GM10248 (cell line): ENCODE measurements at regions of chr6 and their contacts with region 1.

Region 1: DNA sequence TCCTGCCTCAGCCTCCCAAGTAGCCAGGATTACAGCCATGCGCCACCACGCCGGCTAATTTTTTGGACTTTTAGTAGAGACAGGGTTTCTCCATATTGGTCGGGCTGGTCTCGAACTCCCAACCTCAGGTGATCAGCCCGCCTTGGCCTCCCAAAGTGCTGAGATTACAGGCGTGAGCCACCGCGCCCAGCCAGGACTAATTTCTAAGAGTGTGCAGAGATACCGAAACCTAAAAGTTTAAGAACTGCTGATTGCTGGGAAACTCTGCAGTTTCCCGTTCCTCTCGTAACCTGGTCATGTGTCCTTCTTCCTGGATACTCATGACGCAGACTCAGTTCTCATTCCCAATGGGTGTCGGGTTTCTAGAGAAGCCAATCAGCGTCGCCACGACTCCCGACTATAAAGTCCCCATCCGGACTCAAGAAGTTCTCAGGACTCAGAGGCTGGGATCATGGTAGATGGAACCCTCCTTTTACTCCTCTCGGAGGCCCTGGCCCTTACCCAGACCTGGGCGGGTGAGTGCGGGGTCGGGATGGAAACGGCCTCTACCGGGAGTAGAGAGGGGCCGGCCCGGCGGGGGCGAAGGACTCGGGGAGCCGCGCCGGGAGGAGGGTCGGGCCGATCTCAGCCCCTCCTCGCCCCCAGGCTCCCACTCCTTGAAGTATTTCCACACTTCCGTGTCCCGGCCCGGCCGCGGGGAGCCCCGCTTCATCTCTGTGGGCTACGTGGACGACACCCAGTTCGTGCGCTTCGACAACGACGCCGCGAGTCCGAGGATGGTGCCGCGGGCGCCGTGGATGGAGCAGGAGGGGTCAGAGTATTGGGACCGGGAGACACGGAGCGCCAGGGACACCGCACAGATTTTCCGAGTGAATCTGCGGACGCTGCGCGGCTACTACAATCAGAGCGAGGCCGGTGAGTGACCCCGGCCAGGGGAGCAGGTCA is at the start of gene HLA-E:
- DNase-seq: peak; percentile 93
- CTCF ChIP-seq: no peak

Region 2: DNA sequence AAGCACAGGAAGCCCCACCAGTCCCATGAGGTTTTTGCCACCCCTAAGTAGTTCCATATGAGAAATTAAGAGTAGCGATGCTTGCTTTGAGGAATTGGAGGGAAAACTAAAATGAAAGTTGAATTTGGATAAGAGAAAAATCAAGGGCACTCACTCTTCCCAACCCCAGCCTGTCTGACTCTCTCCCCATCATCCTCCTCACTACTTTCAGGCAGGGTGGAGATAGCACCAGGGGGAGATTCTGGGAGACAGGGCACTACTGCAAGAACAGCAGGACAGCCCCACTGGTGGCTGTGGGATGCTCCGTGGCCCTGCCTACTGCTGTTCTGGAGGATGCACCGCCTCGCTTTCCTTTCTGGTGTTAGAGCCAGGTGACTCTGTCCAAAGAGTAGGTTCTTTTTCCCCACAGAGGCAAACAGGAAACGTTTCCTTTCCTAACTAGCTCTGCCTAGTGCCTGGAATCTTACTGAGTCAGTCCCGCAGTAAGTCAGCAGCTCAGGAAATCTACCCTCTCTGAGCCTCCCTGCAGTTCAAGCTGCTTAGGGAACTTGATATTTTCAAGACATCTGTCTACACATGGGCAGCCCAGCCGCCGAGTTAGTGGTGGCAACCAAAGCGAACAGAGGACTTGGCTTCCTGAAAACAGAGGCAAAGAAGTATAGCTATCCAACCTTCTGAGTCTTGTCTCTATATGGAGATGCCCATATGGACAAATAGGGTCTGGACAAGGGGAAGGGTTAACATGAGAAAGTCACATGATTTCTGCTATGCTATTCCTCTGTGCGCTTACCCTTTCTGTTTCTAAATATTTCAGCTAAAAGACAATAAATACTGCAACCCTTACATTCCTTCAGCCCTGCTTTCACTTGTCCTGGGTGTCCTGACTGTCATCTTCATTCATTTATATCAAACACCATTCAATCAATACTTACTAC is 11.3 kb after region 1 on chr6:
- CTCF ChIA-PET with region 1: interaction called, 16 read pairs
- POLR2A ChIA-PET with region 1: interaction called, 3 read pairs
- DNase-seq: no peak
- CTCF ChIP-seq: no peak

Region 3: DNA sequence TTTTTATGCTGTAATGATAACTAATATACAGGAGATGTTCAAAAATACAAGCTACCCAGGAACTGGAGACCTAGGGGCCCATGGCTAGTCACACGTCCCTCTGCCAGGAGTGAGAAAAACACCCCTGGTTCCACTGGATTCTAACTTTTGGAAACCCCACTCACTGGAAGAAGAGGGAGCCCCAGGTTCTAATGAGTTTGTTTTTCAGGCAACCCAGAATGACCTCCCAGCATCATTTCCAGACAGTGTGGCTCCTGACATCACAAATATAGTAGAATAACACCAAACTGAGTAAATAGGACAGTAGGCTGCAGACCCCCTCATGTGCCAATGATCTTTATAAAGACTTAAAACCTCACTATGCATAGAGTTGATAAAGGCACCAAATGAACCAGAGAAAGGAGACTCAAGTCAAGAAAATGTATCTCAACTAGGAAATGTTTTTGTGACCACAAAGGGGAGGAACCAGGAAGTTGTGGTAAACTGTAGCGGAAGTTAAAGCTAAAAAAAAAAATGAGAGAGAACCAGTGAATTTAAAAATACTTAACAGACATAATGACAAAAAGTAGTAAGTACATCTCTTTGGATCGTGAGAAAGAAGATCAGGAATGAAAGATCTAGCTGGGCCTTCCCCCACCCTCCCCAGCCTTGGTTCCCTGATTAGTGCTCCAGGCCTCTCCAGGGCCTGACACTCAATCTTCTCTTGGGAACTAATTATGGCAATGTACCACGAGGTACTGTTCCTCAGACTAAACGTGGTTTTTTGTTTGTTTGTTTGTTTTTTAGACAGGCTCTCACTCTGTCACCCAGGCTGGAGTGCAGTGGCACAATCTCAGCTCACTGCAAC is 19.8 kb after region 1 on chr6:
- CTCF ChIA-PET with region 1: interaction called, 10 read pairs
- POLR2A ChIA-PET with region 1: interaction called, 4 read pairs
- DNase-seq: peak; percentile 50
- CTCF ChIP-seq: no peak